Left ventricle myocardium inferior (tissue), 1 donor: ENCODE measurements at regions of chr18 and their contacts with region 1.

Region 1: GRCh38 chr18:74652392-74652988 is 54.8 kb downstream of the ZNF407 start:
- DNase-seq: no peak
- H3K4me3 ChIP-seq: no peak overlapping the region
- H3K27ac ChIP-seq: no peak overlapping the region
- H3K4me1 ChIP-seq: peaks cover 3% of the 10 kb centered on the region
- H3K27me3 ChIP-seq: no peaks in the 10 kb centered on the region
- CTCF ChIP-seq: peak; percentile 68

Region 2: GRCh38 chr18:75478996-75479880 is 826.7 kb after region 1 on chr18:
- intact Hi-C with region 1: loop called (anchors 2 kb)
- DNase-seq: no peak
- H3K4me3 ChIP-seq: no peak overlapping the region
- H3K27ac ChIP-seq: no peak overlapping the region
- H3K4me1 ChIP-seq: no peaks in the 10 kb centered on the region
- H3K27me3 ChIP-seq: no peaks in the 10 kb centered on the region
- CTCF ChIP-seq: peak; percentile 74